ENCODE measurements at regions of chr19 and their contacts with region 1.

Region 1: DNA sequence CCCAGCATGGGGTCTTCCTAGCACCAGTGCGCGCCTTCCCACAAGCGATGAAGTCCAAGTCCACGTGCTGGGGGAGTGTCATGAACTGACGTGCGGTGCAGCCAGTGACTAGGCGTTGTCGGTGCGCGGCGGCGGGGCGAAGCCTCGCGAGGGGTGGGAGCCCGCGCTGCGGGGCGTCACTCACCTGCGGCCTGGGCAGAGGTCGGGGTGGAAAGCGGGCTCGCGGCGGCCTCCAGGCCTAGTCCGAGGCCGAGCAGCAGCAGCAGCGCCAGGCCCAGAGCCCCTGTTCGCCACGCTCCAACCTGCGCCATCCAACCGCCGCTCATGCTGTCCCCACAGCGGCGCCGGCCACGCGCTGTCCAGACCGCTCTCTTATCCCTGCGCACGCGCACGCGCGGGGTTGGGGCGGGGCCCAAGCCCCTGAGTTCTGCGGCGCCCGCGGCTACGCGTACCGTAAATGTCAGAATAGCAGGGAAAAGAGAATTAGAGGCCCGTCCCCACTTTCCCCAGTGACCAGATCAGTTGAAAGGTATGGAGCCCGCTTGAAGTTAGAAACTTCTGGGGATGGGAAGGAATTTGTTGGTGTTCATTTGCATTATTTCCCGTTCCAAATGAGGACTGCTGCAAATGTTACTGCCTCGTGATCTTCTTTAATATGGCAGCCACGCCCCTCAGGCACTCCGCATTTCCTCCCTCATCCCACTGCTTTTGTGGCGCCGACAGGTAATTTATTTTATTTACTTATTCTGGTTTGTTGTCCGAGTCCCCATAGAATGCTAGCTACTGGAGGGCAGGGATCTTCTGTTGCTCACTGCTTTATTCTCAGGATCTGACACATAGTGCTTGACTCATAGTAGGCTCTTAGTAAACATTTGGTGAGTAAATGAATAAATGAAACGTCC is at the start of gene CD320:
- DNase-seq: peak; percentile 86
- H3K4me3 ChIP-seq: peak within 1 kb of the TSS; percentile 51 to 63 (median 61)
- H3K27ac ChIP-seq: peak within 1 kb of the TSS; percentile 42
- H3K4me1 ChIP-seq: peaks cover 14% of the 10 kb centered on the region
- H3K27me3 ChIP-seq: no peaks in the 10 kb centered on the region
- CTCF ChIP-seq: no peak
- total RNA-seq, gene CD320: 8.0 to 31.0 TPM

Region 2: GRCh38 chr19:8334458-8335342 is 26.5 kb after region 1 on chr19:
- CTCF ChIA-PET with region 1: no interaction called
- dilution Hi-C with region 1: no loop called
- in situ Hi-C with region 1: no loop called
- intact Hi-C with region 1: loop called (anchors 1 kb)
- DNase-seq: peak; percentile 92
- H3K4me3 ChIP-seq: peak overlapping the region; percentile 22 to 58 (median 58)
- H3K27ac ChIP-seq: no peak overlapping the region
- H3K4me1 ChIP-seq: peaks cover 19% of the 10 kb centered on the region
- H3K27me3 ChIP-seq: no peaks in the 10 kb centered on the region
- CTCF ChIP-seq: no peak